ENCODE measurements at regions of chr6 and their contacts with region 1.

Region 1: GRCh38 chr6:26249957-26250697 is 114.9 kb upstream of the BTN3A2 start:
- DNase-seq: peak; percentile 79
- ATAC-seq: peak; percentile 52
- H3K4me3 ChIP-seq: peak overlapping the region; percentile 69
- H3K27ac ChIP-seq: peak overlapping the region; percentile 73
- H3K4me1 ChIP-seq: no peaks in the 10 kb centered on the region
- H3K27me3 ChIP-seq: no peaks in the 10 kb centered on the region
- CTCF ChIP-seq: peak; percentile 28; the same call in 1 of the 2 replicates

Region 2: GRCh38 chr6:26234421-26235296 is 15.5 kb before region 1 on chr6:
- CTCF ChIA-PET with region 1: no interaction called
- POLR2A ChIA-PET with region 1: interaction called, 3 read pairs
- intact Hi-C with region 1: loop called (anchors 2 kb)
- DNase-seq: peak; percentile 97
- ATAC-seq: peak; percentile 69
- H3K4me3 ChIP-seq: peak overlapping the region; percentile 68
- H3K27ac ChIP-seq: peak overlapping the region; percentile 79
- H3K4me1 ChIP-seq: peaks cover 40% of the 10 kb centered on the region
- H3K27me3 ChIP-seq: no peaks in the 10 kb centered on the region
- CTCF ChIP-seq: no peak

Region 3: GRCh38 chr6:26270903-26271667 is 21.0 kb after region 1 on chr6:
- CTCF ChIA-PET with region 1: no interaction called
- POLR2A ChIA-PET with region 1: interaction called, 11 read pairs
- intact Hi-C with region 1: no loop called
- DNase-seq: no peak
- ATAC-seq: no peak
- H3K4me3 ChIP-seq: no peak overlapping the region
- H3K27ac ChIP-seq: no peak overlapping the region
- H3K4me1 ChIP-seq: no peaks in the 10 kb centered on the region
- H3K27me3 ChIP-seq: no peaks in the 10 kb centered on the region
- CTCF ChIP-seq: no peak

Region 4: GRCh38 chr6:26421259-26422144 is 171.4 kb after region 1 on chr6:
- CTCF ChIA-PET with region 1: no interaction called
- POLR2A ChIA-PET with region 1: no interaction called
- intact Hi-C with region 1: no loop called
- DNase-seq: peak; percentile 93
- ATAC-seq: peak; percentile 99
- H3K4me3 ChIP-seq: peak overlapping the region; percentile 86
- H3K27ac ChIP-seq: peak overlapping the region; percentile 12; the same call in 1 of the 2 replicates
- H3K4me1 ChIP-seq: peaks cover 8% of the 10 kb centered on the region; the same call in 1 of the 2 replicates
- H3K27me3 ChIP-seq: no peaks in the 10 kb centered on the region
- CTCF ChIP-seq: no peak

Measured in PC-3 (cell line).